ENCODE measurements at regions of chr16 and their contacts with region 1.

Region 1: GRCh38 chr16:85569615-85570212 is 43.4 kb upstream of the GSE1 start:
- DNase-seq: peak; percentile 50
- ATAC-seq: peak; percentile 42
- H3K4me3 Mint-ChIP-seq: peak overlapping the region; percentile 46
- H3K27ac Mint-ChIP-seq: peak overlapping the region; percentile 76
- H3K4me1 Mint-ChIP-seq: peaks cover 46% of the 10 kb centered on the region
- H3K27me3 Mint-ChIP-seq: no peaks in the 10 kb centered on the region

Region 2: GRCh38 chr16:85146922-85147731 is 422.6 kb before region 1 on chr16:
- CTCF ChIA-PET with region 1: no interaction called
- POLR2A ChIA-PET with region 1: no interaction called
- intact Hi-C with region 1: no loop called
- DNase-seq: no peak
- ATAC-seq: no peak
- H3K4me3 Mint-ChIP-seq: no peak overlapping the region
- H3K27ac Mint-ChIP-seq: no peak overlapping the region
- H3K4me1 Mint-ChIP-seq: no peaks in the 10 kb centered on the region
- H3K27me3 Mint-ChIP-seq: no peaks in the 10 kb centered on the region

Region 3: DNA sequence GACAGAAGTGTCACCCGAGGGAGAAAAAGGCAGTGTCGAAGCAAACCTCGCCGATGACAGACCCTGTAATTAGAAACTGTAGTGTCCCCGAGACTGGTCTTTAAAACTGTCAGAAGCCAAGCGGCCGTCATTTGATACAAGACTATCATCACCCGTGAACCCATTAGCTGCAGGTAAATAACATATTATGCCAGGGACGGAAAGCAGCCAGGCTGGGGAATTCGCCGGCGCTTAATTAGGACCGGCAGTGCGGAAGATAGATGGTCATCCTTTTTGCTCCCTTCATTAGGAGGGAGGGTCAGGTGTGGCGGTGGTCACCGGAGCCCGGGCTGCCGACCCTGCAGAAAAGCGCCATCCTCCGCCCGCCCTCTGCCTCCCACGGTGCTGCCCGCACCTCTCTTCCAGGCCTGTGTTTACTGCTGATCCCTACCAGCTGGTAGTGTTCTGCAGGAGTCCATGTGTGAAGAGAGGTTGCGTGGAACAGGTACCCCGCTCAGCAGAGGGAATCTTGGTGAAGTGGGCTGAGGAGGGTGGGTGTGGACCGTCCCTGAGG is 66.0 kb before region 1 on chr16:
- CTCF ChIA-PET with region 1: no interaction called
- POLR2A ChIA-PET with region 1: no interaction called
- intact Hi-C with region 1: no loop called
- DNase-seq: no peak
- ATAC-seq: no peak
- H3K4me3 Mint-ChIP-seq: no peak overlapping the region
- H3K27ac Mint-ChIP-seq: no peak overlapping the region
- H3K4me1 Mint-ChIP-seq: no peaks in the 10 kb centered on the region
- H3K27me3 Mint-ChIP-seq: no peaks in the 10 kb centered on the region

Region 4: DNA sequence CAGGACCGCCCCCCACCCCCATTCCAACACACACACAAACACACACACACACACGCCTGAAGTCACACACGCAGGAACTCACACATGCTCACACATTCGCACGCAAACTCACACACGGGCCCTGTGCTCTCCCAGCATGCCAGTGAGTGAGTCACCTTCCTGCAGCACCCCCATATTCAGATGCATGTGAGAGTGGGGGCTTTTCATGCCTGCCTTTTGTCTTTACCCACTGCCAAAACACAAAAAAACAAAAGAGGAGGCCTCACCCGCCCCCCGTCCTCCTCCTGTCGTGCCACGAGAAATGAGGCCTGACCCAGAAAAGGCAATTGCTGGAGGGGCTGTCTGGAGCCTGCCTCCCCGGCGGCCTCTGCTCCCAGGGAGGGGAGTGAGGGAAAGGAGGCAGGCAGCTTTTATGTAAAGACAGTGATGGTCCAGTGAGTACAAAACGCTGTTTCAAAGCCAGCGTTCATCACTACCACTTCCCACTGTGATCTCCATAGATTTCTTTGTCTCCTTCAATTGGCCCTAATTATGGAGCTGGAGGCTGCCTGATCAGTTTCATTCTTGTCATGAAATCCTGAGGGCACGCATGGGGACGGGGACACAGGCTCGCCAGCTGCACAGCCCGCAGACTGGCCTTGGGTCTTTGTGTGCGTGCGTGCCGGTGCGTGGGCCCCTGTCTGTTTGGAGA is 13.9 kb after region 1 on chr16:
- CTCF ChIA-PET with region 1: no interaction called
- POLR2A ChIA-PET with region 1: no interaction called
- intact Hi-C with region 1: loop called in 1 of 2 experiments (anchors 1 kb)
- DNase-seq: peak; percentile 28
- ATAC-seq: peak; percentile 80
- H3K4me3 Mint-ChIP-seq: peak overlapping the region; percentile 26
- H3K27ac Mint-ChIP-seq: peak overlapping the region; percentile 61
- H3K4me1 Mint-ChIP-seq: peaks cover 16% of the 10 kb centered on the region
- H3K27me3 Mint-ChIP-seq: no peaks in the 10 kb centered on the region